BJ (cell line): ENCODE measurements at regions of chr10 and their contacts with region 1.

Region 1: GRCh38 chr10:95601116-95601719 is 40.0 kb upstream of the SORBS1 start:
- DNase-seq: peak; percentile 30
- H3K4me3 ChIP-seq: no peak overlapping the region
- H3K27me3 ChIP-seq: no peaks in the 10 kb centered on the region; the same call in 1 of the 2 replicates
- CTCF ChIP-seq: peak; percentile 96

Region 2: GRCh38 chr10:95374597-95375209 is 226.5 kb before region 1 on chr10:
- CTCF ChIA-PET with region 1: interaction called, 31 read pairs
- POLR2A ChIA-PET with region 1: no interaction called
- DNase-seq: no peak
- H3K4me3 ChIP-seq: no peak overlapping the region
- H3K27me3 ChIP-seq: peaks cover 5% of the 10 kb centered on the region
- CTCF ChIP-seq: peak; percentile 85

Region 3: DNA sequence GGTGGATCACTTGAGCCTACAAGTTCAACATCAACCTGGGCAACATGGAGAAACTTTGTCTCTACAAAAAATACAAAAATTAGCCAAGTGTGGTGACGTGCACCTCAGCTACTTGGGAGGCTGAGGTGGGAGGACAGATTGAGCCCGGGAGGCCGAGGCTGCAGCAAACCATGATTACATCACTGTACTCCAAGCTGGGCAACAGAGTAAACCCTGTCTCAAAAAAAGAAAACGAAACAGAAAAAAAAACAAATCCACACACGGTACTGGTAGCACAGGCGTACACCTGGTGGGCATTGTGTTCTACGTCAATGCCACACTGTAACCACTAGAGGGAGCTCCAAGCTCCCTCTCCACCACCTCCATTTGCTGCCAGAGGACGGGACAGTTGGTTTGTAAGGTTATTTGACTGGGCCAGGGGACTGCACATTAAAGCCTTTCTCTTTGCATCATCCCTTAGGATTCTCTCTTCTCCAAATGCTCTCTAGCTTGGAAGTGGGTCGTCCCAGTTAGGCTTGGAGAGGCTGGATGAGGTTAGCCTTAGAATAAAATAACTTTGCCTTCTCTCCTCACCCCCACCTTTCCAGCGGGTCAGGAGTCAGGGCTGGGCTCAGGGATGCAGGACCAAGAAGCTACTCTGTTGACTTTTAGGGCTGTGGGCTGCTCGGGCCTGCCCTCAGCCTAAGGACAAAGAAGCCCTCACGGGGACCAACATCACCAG is 170.8 kb before region 1 on chr10:
- CTCF ChIA-PET with region 1: interaction called, 166 read pairs
- POLR2A ChIA-PET with region 1: no interaction called
- DNase-seq: no peak
- H3K4me3 ChIP-seq: no peak overlapping the region
- H3K27me3 ChIP-seq: peaks cover 2% of the 10 kb centered on the region; the same call in 1 of the 2 replicates
- CTCF ChIP-seq: peak; percentile 94

Region 4: DNA sequence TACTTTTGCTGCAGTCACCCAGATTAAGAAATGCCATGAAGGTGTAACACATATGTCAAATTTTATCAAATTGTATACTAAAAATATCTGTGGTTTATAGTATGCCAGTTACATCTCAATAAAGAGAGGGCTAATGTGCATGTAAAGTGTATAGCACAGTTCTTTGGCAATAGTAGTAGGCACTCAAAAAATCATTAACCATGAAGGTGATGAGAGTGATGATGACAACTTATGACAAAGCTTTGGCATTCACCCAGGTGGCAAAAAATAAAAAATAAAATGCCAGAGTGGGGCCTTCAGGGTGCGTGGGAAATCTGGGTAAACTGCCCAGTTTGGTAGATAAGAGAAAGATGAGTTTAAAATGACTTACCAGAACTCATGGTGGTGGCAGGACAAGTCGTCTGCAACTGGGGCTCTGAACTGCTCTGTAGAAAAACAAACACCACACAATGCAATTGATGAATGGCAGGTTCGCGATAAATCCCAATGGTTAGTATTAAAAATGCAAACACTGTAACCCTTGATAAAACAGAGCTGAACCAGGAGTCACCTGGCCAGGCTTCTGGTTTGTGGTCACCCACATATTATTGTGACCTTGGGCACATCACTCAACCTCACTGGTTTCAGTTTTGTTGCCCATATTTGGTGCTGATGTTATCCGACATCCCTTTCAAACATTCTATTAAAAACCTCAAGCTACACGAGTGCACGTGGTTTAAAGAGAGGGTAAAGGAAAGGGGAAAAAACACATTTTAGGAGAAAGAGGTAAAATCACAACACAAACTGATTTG is 160.3 kb before region 1 on chr10:
- CTCF ChIA-PET with region 1: interaction called, 166 read pairs
- POLR2A ChIA-PET with region 1: no interaction called
- DNase-seq: no peak
- H3K4me3 ChIP-seq: no peak overlapping the region
- H3K27me3 ChIP-seq: no peaks in the 10 kb centered on the region
- CTCF ChIP-seq: no peak

Region 5: GRCh38 chr10:95445837-95446486 is 155.3 kb before region 1 on chr10:
- CTCF ChIA-PET with region 1: interaction called, 12 read pairs
- POLR2A ChIA-PET with region 1: no interaction called
- DNase-seq: peak; percentile 18
- H3K4me3 ChIP-seq: no peak overlapping the region
- H3K27me3 ChIP-seq: no peaks in the 10 kb centered on the region
- CTCF ChIP-seq: peak; percentile 80

Region 6: DNA sequence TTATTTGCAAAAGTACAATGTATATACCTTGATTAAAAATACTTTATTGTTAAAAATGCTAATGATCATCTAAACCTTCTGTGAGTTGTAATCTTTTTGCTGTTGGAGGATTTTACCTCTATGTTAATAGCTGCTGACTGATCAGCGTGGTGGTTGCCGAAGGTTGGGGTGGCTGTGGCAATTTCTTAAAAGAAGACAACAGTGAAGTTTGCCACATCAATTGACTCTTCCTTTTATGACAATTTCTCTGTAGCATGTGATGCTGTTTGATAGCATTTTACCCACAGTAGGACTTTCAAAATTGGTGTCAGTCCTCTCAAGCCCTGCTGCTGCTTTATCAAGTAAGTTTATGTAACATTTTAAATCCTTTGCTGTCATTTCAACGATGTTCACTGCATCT is 137.8 kb after region 1 on chr10:
- CTCF ChIA-PET with region 1: no interaction called
- POLR2A ChIA-PET with region 1: no interaction called
- DNase-seq: no peak
- H3K4me3 ChIP-seq: no peak overlapping the region
- H3K27me3 ChIP-seq: no peaks in the 10 kb centered on the region
- CTCF ChIP-seq: no peak